Caco-2 (cell line): ENCODE measurements at regions of chr2 and their contacts with region 1.

Region 1: GRCh38 chr2:71447280-71447679 is 6.1 kb upstream of the DYSF start:
- DNase-seq: no peak
- H3K4me3 ChIP-seq: no peak overlapping the region
- H3K4me3 Mint-ChIP-seq: no peak overlapping the region
- H3K27ac Mint-ChIP-seq: no peak overlapping the region
- H3K4me1 ChIP-seq: no peaks in the 10 kb centered on the region
- H3K4me1 Mint-ChIP-seq: peaks cover 40% of the 10 kb centered on the region
- H3K27me3 ChIP-seq: no peaks in the 10 kb centered on the region
- H3K27me3 Mint-ChIP-seq: no peaks in the 10 kb centered on the region
- CTCF ChIP-seq: no peak

Region 2: DNA sequence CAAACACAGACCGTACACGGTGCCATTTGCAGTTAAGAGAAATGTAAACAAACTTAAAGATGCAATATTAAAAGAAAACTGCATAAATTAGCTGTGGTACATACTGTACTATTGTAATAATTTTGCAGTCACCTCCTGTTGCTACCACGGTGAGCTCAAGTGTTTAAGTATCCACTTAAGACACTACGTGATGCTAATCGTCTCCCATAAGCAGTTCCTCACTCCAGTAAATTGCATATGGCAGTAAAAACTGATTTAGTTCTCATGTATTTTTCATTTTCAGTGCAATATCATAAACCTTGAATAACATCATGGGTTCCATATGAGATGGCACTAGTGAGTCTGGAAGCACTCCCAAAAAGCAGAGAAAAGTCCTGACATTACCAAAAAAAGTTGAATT is 641.3 kb before region 1 on chr2:
- CTCF ChIA-PET with region 1: no interaction called
- POLR2A ChIA-PET with region 1: no interaction called
- intact Hi-C with region 1: no loop called
- DNase-seq: no peak
- H3K4me3 ChIP-seq: no peak overlapping the region
- H3K4me3 Mint-ChIP-seq: no peak overlapping the region
- H3K27ac Mint-ChIP-seq: no peak overlapping the region
- H3K4me1 ChIP-seq: no peaks in the 10 kb centered on the region
- H3K4me1 Mint-ChIP-seq: no peaks in the 10 kb centered on the region
- H3K27me3 ChIP-seq: no peaks in the 10 kb centered on the region
- H3K27me3 Mint-ChIP-seq: peaks cover 6% of the 10 kb centered on the region
- CTCF ChIP-seq: no peak

Region 3: GRCh38 chr2:71498261-71498701 is 51.0 kb after region 1 on chr2:
- CTCF ChIA-PET with region 1: no interaction called
- POLR2A ChIA-PET with region 1: no interaction called
- intact Hi-C with region 1: no loop called
- DNase-seq: no peak
- H3K4me3 ChIP-seq: no peak overlapping the region
- H3K4me3 Mint-ChIP-seq: no peak overlapping the region
- H3K27ac Mint-ChIP-seq: no peak overlapping the region
- H3K4me1 ChIP-seq: 0 out of 2 replicates have a peak, but pooled peaks cover 3% of the 10 kb centered on the region
- H3K4me1 Mint-ChIP-seq: no peaks in the 10 kb centered on the region
- H3K27me3 ChIP-seq: no peaks in the 10 kb centered on the region
- H3K27me3 Mint-ChIP-seq: no peaks in the 10 kb centered on the region
- CTCF ChIP-seq: no peak

Region 4: GRCh38 chr2:71566372-71566771 is 119.1 kb after region 1 on chr2:
- CTCF ChIA-PET with region 1: interaction called, 10 read pairs
- POLR2A ChIA-PET with region 1: no interaction called
- intact Hi-C with region 1: no loop called
- DNase-seq: no peak
- H3K4me3 ChIP-seq: no peak overlapping the region
- H3K4me3 Mint-ChIP-seq: no peak overlapping the region
- H3K27ac Mint-ChIP-seq: no peak overlapping the region
- H3K4me1 ChIP-seq: no peaks in the 10 kb centered on the region
- H3K4me1 Mint-ChIP-seq: no peaks in the 10 kb centered on the region
- H3K27me3 ChIP-seq: no peaks in the 10 kb centered on the region
- H3K27me3 Mint-ChIP-seq: peaks cover 4% of the 10 kb centered on the region
- CTCF ChIP-seq: no peak